Dendritic cell treated with granulocyte-macrophage colony-stimulating factor and Interleukin-4, amounts not matched to agents 40 ng/mL and 50 ng/mL, for 4 days (primary cell): ENCODE measurements at regions of chr15 and their contacts with region 1.

Region 1: GRCh38 chr15:37339856-37340255 is 239.5 kb upstream of the MEIS2 start:
- H3K4me3 Mint-ChIP-seq: no peak overlapping the region
- H3K27ac Mint-ChIP-seq: no peak overlapping the region
- H3K4me1 Mint-ChIP-seq: no peaks in the 10 kb centered on the region
- H3K27me3 Mint-ChIP-seq: no peaks in the 10 kb centered on the region

Region 2: GRCh38 chr15:37140531-37141058 is 199.3 kb before region 1 on chr15:
- intact Hi-C with region 1: no loop called
- H3K4me3 Mint-ChIP-seq: no peak overlapping the region
- H3K27ac Mint-ChIP-seq: no peak overlapping the region
- H3K4me1 Mint-ChIP-seq: no peaks in the 10 kb centered on the region
- H3K27me3 Mint-ChIP-seq: peaks cover 4% of the 10 kb centered on the region

Region 3: GRCh38 chr15:37394402-37395099 is 54.7 kb after region 1 on chr15:
- intact Hi-C with region 1: loop called (anchors 10 kb)
- H3K4me3 Mint-ChIP-seq: no peak overlapping the region
- H3K27ac Mint-ChIP-seq: no peak overlapping the region
- H3K4me1 Mint-ChIP-seq: no peaks in the 10 kb centered on the region
- H3K27me3 Mint-ChIP-seq: no peaks in the 10 kb centered on the region